Heart left ventricle (tissue), 16 donors: ENCODE measurements at regions of chr7 and their contacts with region 1.

Region 1: GRCh38 chr7:90629297-90629918 is 33.3 kb downstream of the CDK14 start:
- DNase-seq: no peak
- ATAC-seq: peak; percentile 78 to 95 (median 85)
- H3K4me3 ChIP-seq: no peak overlapping the region
- H3K27ac ChIP-seq: no peak overlapping the region
- H3K4me1 ChIP-seq: peaks cover 0 to 24% (median 18%) of the 10 kb centered on the region in 12 donors
- H3K27me3 ChIP-seq: no peaks in the 10 kb centered on the region
- CTCF ChIP-seq: peak; percentile 54 to 74 (median 67)
- POLR2A ChIP-seq: no peak

Region 2: DNA sequence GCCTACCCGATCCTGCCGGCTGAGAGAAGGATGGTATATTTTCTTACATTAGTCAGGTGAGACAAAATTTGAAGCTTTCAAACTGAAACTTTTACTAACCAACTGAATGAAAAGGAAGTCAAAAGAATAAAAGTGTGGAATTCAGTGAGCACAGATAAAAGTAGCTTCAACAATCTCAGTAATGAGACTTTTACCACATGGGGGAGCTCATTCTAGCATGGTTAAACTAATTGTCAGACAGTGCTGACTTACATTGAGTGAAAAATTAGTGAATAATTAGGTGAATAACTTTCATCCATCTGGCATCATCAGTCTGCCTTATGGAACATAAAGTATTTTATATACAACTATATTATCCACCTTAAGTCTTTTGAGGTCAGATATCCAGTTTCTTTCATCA is 316.7 kb before region 1 on chr7:
- intact Hi-C with region 1: no loop called
- DNase-seq: no peak
- ATAC-seq: no peak
- H3K4me3 ChIP-seq: no peak overlapping the region
- H3K27ac ChIP-seq: no peak overlapping the region
- H3K4me1 ChIP-seq: no peaks in the 10 kb centered on the region
- H3K27me3 ChIP-seq: peaks cover 0 to 10% (median 0%) of the 10 kb centered on the region in 9 donors
- CTCF ChIP-seq: peak in 6 of 12 donors; percentile 6 to 37 (median 23)
- POLR2A ChIP-seq: no peak

Region 3: GRCh38 chr7:90455163-90456030 is 174.0 kb before region 1 on chr7:
- intact Hi-C with region 1: loop called in 8 of 10 experiments (anchors 2 to 10 kb)
- DNase-seq: no peak
- ATAC-seq: peak in 3 of 4 donors; percentile 65 to 75 (median 68)
- H3K4me3 ChIP-seq: peak overlapping the region in 6 of 12 donors; percentile 7 to 35 (median 24)
- H3K27ac ChIP-seq: no peak overlapping the region
- H3K4me1 ChIP-seq: peaks cover 0 to 8% (median 2%) of the 10 kb centered on the region in 12 donors
- H3K27me3 ChIP-seq: no peaks in the 10 kb centered on the region
- CTCF ChIP-seq: peak; percentile 42 to 82 (median 66)
- POLR2A ChIP-seq: no peak

Region 4: DNA sequence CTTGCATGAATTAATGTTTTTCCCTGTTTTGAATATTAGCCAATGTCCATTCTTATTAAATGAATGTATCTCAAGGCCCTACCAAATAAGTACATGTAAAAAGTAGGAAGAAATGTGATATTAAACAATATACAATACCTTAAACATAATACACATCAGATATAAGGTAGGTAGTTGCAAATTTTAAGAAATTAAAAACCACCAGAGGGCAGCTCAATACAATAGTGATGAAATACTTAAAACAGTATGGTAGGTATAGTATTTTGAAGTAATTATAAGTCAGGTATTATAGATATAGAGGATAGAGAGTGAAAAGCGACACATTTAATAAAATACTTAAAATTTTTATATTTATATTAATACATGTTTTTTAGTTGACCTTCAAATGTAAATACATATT is 76.9 kb before region 1 on chr7:
- intact Hi-C with region 1: loop called in 9 of 10 experiments (anchors 1 to 5 kb)
- DNase-seq: no peak
- ATAC-seq: peak in 1 of 4 donors; percentile 57
- H3K4me3 ChIP-seq: no peak overlapping the region
- H3K27ac ChIP-seq: no peak overlapping the region
- H3K4me1 ChIP-seq: no peaks in the 10 kb centered on the region
- H3K27me3 ChIP-seq: no peaks in the 10 kb centered on the region
- CTCF ChIP-seq: peak in 11 of 12 donors; percentile 18 to 63 (median 49)
- POLR2A ChIP-seq: no peak

Region 5: GRCh38 chr7:90579171-90579688 is 50.2 kb before region 1 on chr7:
- intact Hi-C with region 1: loop called in 1 of 10 experiments (anchors 10 kb)
- DNase-seq: no peak
- ATAC-seq: no peak
- H3K4me3 ChIP-seq: no peak overlapping the region
- H3K27ac ChIP-seq: no peak overlapping the region
- H3K4me1 ChIP-seq: peaks cover 0 to 9% (median 4%) of the 10 kb centered on the region in 12 donors
- H3K27me3 ChIP-seq: no peaks in the 10 kb centered on the region
- CTCF ChIP-seq: no peak
- POLR2A ChIP-seq: no peak

Region 6: DNA sequence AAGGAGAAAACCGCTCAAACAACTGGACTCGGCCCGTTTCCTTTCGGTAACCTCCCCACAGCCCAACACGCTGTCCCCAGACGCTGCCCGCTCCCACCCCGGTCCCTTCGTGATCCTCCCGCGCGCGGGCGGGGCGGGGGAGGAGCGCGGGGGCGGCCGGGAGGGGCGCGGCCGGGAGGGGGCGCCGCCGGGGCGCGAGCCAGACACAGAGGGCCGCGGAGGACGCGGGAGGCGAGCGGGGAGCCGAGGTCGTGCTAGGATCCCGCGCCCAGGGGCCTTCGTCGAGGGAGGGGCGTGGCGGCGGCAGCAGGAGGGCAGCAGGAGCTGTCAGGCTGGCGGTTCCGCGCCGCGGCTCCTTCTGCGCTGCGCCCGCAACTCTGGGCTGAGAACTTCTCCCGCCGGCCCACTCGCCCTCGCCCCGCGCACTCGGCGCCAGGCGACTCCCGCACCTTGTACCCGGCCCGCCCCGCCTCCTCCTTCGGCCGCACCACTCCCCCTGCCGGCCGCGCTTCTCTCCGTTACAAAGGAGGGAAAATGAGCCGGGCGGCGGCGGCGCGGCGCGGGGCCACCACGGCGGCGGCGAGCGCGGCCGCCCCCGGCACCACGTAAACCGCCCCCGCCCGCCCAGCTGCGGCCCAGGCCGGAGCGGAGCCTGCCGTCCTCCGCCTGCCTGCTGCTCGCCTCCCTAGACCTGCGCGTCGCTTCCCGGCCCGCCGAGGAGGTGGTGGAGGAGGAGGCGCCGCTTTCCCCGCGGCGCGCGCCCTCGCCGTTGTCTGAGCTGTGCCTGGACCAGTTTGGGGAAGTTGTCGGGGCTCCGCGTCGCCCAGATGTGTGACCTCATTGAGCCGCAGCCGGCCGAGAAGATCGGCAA is 33.4 kb before region 1 on chr7 and contains the start of gene CDK14:
- intact Hi-C with region 1: loop called in 1 of 10 experiments (anchors 2 kb)
- DNase-seq: peak; percentile 78 to 90 (median 85)
- ATAC-seq: peak; percentile 35 to 84 (median 68)
- H3K4me3 ChIP-seq: peak within 1 kb of the TSS; percentile 73 to 93 (median 85)
- H3K27ac ChIP-seq: peak within 1 kb of the TSS; percentile 80 to 88 (median 84)
- H3K4me1 ChIP-seq: peaks cover 0 to 37% (median 15%) of the 10 kb centered on the region in 12 donors
- H3K27me3 ChIP-seq: no peaks in the 10 kb centered on the region
- CTCF ChIP-seq: peak; percentile 24 to 60 (median 49)
- POLR2A ChIP-seq: no peak
- total RNA-seq, gene CDK14: 12.2 to 37.7 (median 26.3) TPM

Region 7: GRCh38 chr7:90877201-90877600 is 247.8 kb after region 1 on chr7:
- intact Hi-C with region 1: no loop called
- DNase-seq: no peak
- ATAC-seq: no peak
- H3K4me3 ChIP-seq: no peak overlapping the region
- H3K27ac ChIP-seq: no peak overlapping the region
- H3K4me1 ChIP-seq: no peaks in the 10 kb centered on the region
- H3K27me3 ChIP-seq: no peaks in the 10 kb centered on the region
- CTCF ChIP-seq: no peak
- POLR2A ChIP-seq: no peak